ENCODE measurements at regions of chr19 and their contacts with region 1.

Region 1: DNA sequence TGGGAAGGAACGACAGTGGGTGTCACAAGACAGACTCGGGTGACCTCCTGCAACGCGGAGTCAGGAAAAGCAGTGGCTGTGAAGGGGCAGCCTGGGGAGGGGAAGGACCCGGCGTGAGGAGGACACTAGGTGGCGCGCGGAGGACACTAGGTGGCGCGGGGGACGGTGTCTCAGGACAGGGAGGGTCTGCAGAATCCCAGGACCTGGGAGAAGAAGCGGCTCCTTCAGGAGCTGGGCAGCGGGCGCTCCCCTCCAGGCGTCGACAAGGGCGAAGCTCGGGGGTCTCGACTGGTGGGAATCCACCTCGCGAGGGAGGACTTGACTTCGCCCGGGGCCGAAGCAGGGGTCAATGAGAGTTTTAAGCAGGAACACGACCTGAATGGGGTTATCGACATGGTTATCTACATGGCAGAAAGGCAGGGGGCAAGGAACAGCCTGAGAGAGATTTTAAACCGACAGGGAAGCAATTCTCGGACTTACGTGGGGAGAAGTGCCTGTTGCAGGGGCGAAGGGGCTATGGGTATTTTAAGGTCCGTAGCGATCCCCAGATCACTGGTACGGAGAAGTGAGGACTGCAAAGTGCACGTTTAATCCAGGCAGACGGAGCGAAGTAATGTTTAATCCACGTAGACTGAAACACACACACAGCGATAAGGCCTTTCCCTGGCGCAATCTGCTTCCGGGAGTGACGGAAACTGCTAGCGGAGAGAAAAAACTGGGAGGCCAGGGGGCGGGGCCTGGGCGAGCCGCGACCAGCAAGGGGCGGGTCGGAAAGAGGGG is at the start of gene ZNF616:
- DNase-seq: peak; percentile 98
- H3K4me3 ChIP-seq: peak within 1 kb of the TSS; percentile 75 to 93
- H3K27ac ChIP-seq: peak within 1 kb of the TSS; percentile 75 to 89
- H3K4me1 ChIP-seq: peaks cover 13% of the 10 kb centered on the region
- H3K27me3 ChIP-seq: no peaks in the 10 kb centered on the region
- CTCF ChIP-seq: peak; percentile 73 to 75 (median 75)
- POLR2A ChIP-seq: peak; percentile 50
- total RNA-seq, gene ZNF616: 9.0 to 11.3 TPM

Region 2: GRCh38 chr19:52028027-52028779 is 111.2 kb before region 1 on chr19 and contains the start of gene ZNF614:
- intact Hi-C with region 1: no loop called
- DNase-seq: peak; percentile 94
- H3K4me3 ChIP-seq: peak within 1 kb of the TSS; percentile 58 to 79
- H3K27ac ChIP-seq: peak within 1 kb of the TSS; percentile 81 to 92
- H3K4me1 ChIP-seq: peaks cover 6% of the 10 kb centered on the region
- H3K27me3 ChIP-seq: no peaks in the 10 kb centered on the region
- CTCF ChIP-seq: no peak
- POLR2A ChIP-seq: no peak
- total RNA-seq, gene ZNF614: 13.2 to 13.9 TPM

Region 3: DNA sequence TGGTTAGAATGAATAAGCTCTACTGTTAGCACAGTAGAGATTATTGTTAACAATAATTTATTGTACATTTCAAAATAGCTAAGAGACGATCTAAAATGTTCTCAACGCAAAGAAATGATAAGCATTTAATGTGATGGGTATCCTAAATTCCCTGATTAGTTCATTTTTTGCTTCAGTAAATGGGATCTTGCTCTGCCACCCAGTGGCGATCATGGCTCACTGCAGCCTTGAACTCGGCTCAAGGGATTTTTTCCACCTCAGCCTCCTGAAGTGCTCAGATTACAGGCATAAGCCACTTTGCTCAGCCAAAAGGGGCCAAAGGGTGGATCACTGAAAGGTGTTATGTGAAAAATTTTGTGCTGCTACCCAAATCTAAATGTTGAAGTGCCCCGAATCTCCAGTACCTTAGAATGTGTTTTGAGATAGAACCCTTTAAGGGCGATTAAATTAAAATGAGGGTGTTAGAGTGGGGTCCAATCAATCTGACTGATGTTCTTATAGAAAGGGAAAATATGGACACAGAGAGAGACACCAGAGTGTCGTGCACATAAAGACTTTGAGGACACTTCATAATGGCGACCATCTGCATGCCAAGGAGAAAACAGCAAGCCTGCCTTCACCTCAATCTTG is 98.4 kb after region 1 on chr19:
- intact Hi-C with region 1: loop called (anchors 10 kb)
- DNase-seq: peak; percentile 68
- H3K4me3 ChIP-seq: no peak overlapping the region
- H3K27ac ChIP-seq: no peak overlapping the region
- H3K4me1 ChIP-seq: no peaks in the 10 kb centered on the region
- H3K27me3 ChIP-seq: no peaks in the 10 kb centered on the region
- CTCF ChIP-seq: peak; percentile 81 to 89 (median 83)
- POLR2A ChIP-seq: no peak

Measured in testis (tissue), 5 donors.